IMR-90 (cell line): ENCODE measurements at regions of chr6 and their contacts with region 1.

Region 1: GRCh38 chr6:25490018-25490801 is 161.8 kb upstream of the SCGN start:
- DNase-seq: peak; percentile 73
- ATAC-seq: peak; percentile 96
- H3K4me3 ChIP-seq: no peak overlapping the region
- H3K27ac ChIP-seq: no peak overlapping the region
- H3K4me1 ChIP-seq: no peaks in the 10 kb centered on the region
- H3K27me3 ChIP-seq: no peaks in the 10 kb centered on the region
- CTCF ChIP-seq: peak; percentile 86
- POLR2A ChIP-seq: no peak
- RAD21 ChIP-seq: peak; percentile 77

Region 2: DNA sequence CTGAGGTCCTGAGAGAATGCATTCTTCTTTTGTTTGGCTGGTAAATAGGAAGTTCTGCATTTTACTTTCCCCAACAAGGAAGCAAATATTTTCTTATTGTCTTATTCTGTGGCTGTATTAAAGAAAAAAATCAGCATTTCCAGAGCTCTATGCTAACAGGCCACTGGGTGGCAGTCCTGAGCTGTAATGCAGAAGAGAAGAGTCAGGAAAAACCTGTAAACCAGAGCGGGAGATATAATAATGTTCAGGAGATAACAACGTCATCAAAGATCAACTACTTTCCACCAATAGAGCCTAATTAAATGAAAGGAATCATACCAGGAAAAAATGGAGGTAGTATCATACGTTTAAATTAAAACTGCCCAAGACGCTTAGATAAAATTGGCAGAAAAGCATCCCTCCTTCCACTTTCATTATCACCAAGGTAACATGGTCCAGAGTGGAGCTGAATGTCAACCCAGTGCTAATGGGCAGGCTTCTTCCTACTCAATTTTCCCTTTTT is 266.7 kb before region 1 on chr6:
- CTCF ChIA-PET with region 1: interaction called, 9 read pairs
- POLR2A ChIA-PET with region 1: no interaction called
- dilution Hi-C with region 1: no loop called
- in situ Hi-C with region 1: no loop called
- intact Hi-C with region 1: loop called (anchors 1 kb)
- DNase-seq: peak; percentile 73
- ATAC-seq: peak; percentile 96
- H3K4me3 ChIP-seq: no peak overlapping the region
- H3K27ac ChIP-seq: no peak overlapping the region
- H3K4me1 ChIP-seq: no peaks in the 10 kb centered on the region
- H3K27me3 ChIP-seq: no peaks in the 10 kb centered on the region
- CTCF ChIP-seq: peak; percentile 95
- POLR2A ChIP-seq: no peak
- RAD21 ChIP-seq: peak; percentile 94

Region 3: DNA sequence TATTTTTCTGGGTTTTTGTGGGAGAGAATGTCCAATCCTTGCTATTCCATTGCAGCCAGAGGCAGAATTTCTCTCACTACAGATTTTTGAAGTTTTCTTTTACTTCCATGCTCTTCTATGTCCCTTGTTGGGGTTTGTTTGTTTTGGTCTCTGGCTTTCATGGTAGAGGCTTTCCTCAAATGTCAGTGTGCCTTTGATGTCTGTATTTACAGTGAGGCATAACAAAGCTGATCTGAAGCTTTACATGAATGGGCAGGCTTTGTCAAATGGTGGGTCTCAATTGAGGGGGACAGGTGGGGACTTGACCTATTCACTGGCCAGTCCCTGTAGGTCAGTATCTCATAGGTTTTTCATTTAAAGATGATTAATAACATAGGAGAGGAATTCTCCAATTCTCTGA is 219.7 kb before region 1 on chr6:
- CTCF ChIA-PET with region 1: interaction called, 23 read pairs
- POLR2A ChIA-PET with region 1: no interaction called
- dilution Hi-C with region 1: no loop called
- in situ Hi-C with region 1: loop called (anchors 5 kb)
- intact Hi-C with region 1: loop called (anchors 1 kb)
- DNase-seq: no peak
- ATAC-seq: no peak
- H3K4me3 ChIP-seq: no peak overlapping the region
- H3K27ac ChIP-seq: no peak overlapping the region
- H3K4me1 ChIP-seq: no peaks in the 10 kb centered on the region
- H3K27me3 ChIP-seq: peaks cover 5% of the 10 kb centered on the region
- CTCF ChIP-seq: no peak
- POLR2A ChIP-seq: no peak
- RAD21 ChIP-seq: no peak

Region 4: GRCh38 chr6:25278914-25279747 is 211.1 kb before region 1 on chr6 and contains the start of gene CARMIL1:
- CTCF ChIA-PET with region 1: interaction called, 42 read pairs
- POLR2A ChIA-PET with region 1: no interaction called
- dilution Hi-C with region 1: no loop called
- in situ Hi-C with region 1: loop called (anchors 5 kb)
- intact Hi-C with region 1: loop called (anchors 1 kb)
- DNase-seq: peak; percentile 52
- ATAC-seq: peak; percentile 89
- H3K4me3 ChIP-seq: peak within 1 kb of the TSS; percentile 80
- H3K27ac ChIP-seq: peak within 1 kb of the TSS; percentile 22; the same call in 1 of the 2 replicates
- H3K4me1 ChIP-seq: no peaks in the 10 kb centered on the region
- H3K27me3 ChIP-seq: no peaks in the 10 kb centered on the region; the same call in 1 of the 2 replicates
- CTCF ChIP-seq: peak; percentile 67
- POLR2A ChIP-seq: no peak
- RAD21 ChIP-seq: peak; percentile 65
- total RNA-seq, gene CARMIL1: 2.9 and 3.3 TPM in 2 replicates

Region 5: DNA sequence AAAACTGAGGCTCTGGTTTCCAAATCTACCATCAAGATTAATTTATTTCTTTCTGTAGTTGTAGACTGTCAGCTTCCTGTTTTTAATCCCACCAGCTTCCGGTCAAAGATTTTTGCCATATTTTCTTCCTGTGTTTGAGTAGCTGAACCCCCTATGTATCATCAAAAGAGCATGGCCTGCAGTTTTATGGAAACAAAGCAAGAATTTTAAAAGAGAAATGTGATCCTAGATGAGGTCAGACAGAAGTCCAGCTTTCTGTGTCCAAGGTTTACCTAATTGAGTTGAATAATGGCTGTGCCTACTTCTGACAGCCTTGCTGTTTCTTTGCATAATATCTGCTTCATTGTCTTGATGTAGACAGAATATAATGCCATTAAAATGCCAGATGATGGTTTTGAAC is 47.3 kb before region 1 on chr6:
- CTCF ChIA-PET with region 1: no interaction called
- POLR2A ChIA-PET with region 1: no interaction called
- dilution Hi-C with region 1: no loop called
- in situ Hi-C with region 1: no loop called
- intact Hi-C with region 1: no loop called
- DNase-seq: peak; percentile 8
- ATAC-seq: peak; percentile 32; the same call in 1 of the 2 replicates
- H3K4me3 ChIP-seq: no peak overlapping the region
- H3K27ac ChIP-seq: no peak overlapping the region
- H3K4me1 ChIP-seq: peaks cover 1% of the 10 kb centered on the region; the same call in 1 of the 2 replicates
- H3K27me3 ChIP-seq: no peaks in the 10 kb centered on the region
- CTCF ChIP-seq: no peak
- POLR2A ChIP-seq: no peak
- RAD21 ChIP-seq: no peak

Region 6: DNA sequence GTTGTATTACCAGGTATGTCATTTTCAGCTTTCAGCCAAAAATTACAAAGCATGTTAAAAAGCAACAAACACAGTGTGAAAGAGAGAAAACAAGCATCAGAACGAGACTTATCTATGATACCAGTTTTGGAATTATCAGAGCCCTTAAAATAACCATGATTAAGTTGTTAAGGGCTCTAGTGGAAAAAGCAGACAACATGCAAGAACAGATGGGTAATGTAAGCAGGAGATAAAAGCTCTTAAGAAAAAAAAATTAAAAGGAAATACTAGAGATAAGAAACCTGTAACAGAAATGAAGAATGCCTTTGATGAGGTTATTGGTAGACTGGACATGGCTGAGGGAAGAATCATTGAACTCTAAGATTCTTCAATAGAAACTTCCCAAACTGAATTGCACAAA is 34.3 kb after region 1 on chr6:
- CTCF ChIA-PET with region 1: no interaction called
- POLR2A ChIA-PET with region 1: no interaction called
- dilution Hi-C with region 1: no loop called
- in situ Hi-C with region 1: no loop called
- intact Hi-C with region 1: loop called (anchors 1 kb)
- DNase-seq: no peak
- ATAC-seq: no peak
- H3K4me3 ChIP-seq: no peak overlapping the region
- H3K27ac ChIP-seq: no peak overlapping the region
- H3K4me1 ChIP-seq: no peaks in the 10 kb centered on the region
- H3K27me3 ChIP-seq: no peaks in the 10 kb centered on the region
- CTCF ChIP-seq: no peak
- POLR2A ChIP-seq: no peak
- RAD21 ChIP-seq: no peak

Region 7: DNA sequence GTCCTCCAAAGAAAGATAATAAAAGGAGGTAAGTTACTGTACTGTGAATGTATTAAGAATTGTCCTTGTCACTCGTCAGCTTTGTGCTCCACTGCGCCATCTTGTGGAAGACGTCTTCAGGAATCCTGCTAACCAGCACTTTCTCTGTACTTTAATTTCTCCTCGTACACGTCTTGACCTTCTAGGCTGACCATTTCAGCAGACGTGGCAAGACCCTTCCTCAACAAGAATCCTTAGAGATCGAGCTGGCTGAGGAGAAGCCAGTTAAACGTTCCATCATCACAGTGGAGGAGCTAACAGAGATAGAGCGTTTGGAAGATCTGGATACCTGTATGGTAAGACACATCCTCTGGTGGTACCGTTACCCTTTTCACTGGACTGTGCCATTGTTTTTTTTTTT is 66.3 kb after region 1 on chr6:
- CTCF ChIA-PET with region 1: interaction called, 7 read pairs
- POLR2A ChIA-PET with region 1: no interaction called
- dilution Hi-C with region 1: no loop called
- in situ Hi-C with region 1: no loop called
- intact Hi-C with region 1: loop called (anchors 1 kb)
- DNase-seq: peak; percentile 74
- ATAC-seq: peak; percentile 77
- H3K4me3 ChIP-seq: no peak overlapping the region
- H3K27ac ChIP-seq: no peak overlapping the region
- H3K4me1 ChIP-seq: no peaks in the 10 kb centered on the region
- H3K27me3 ChIP-seq: no peaks in the 10 kb centered on the region
- CTCF ChIP-seq: peak; percentile 77
- POLR2A ChIP-seq: no peak
- RAD21 ChIP-seq: peak; percentile 66